Gastrocnemius medialis (tissue), 4 donors: ENCODE measurements at regions of chr3 and their contacts with region 1.

Region 1: DNA sequence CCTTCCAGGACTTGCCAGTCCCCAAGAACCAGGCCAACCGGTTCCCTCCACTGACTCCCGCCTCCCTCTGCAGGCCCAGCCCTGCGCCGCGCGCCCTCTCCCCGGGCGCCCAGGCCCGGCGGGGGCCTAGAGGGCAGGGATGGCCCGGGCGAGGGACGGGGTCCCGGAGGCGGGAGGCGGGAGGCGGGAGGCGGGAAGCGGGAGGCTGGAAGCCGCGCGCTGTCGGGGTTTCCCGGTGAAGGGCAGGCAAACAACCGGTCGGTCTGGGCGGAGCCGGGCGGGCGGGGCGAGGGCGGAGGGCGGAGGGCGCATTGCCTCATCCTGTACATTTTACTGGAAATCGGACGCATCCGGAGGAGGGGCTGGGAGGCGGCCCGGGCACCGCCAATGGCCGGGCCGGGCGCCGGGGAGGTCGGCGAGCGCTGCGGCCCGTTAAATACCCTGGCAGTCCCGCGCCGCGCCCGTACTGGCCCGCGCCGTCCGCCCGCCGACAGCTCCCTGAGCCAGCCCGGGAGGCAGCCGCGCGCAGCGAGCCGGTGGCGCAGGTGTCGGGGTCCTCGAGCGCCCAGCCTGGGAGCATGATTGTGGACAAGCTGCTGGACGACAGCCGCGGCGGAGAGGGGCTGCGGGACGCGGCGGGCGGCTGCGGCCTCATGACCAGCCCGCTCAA is at the start of gene NFKBIZ:
- DNase-seq: peak; percentile 93 to 95
- ATAC-seq: peak; percentile 93 to 94
- H3K4me3 ChIP-seq: peak within 1 kb of the TSS; percentile 73 to 89 (median 85)
- H3K27ac ChIP-seq: peak within 1 kb of the TSS; percentile 83 to 96 (median 94)
- H3K4me1 ChIP-seq: peaks cover 6% of the 10 kb centered on the region in 2 donors
- H3K27me3 ChIP-seq: no peaks in the 10 kb centered on the region
- CTCF ChIP-seq: peak in 1 of 5 experiments; percentile 18
- POLR2A ChIP-seq: peak; percentile 96 to 99
- total RNA-seq, gene NFKBIZ: 9.2 to 25.9 (median 20.6) TPM

Region 2: GRCh38 chr3:101588616-101589015 is 260.6 kb before region 1 on chr3:
- in situ Hi-C with region 1: no loop called
- intact Hi-C with region 1: no loop called
- DNase-seq: no peak
- ATAC-seq: no peak
- H3K4me3 ChIP-seq: no peak overlapping the region
- H3K27ac ChIP-seq: no peak overlapping the region
- H3K4me1 ChIP-seq: no peaks in the 10 kb centered on the region
- H3K27me3 ChIP-seq: no peaks in the 10 kb centered on the region
- CTCF ChIP-seq: no peak
- POLR2A ChIP-seq: no peak

Region 3: GRCh38 chr3:101809178-101810021 is 39.8 kb before region 1 on chr3:
- in situ Hi-C with region 1: no loop called
- intact Hi-C with region 1: loop called (anchors 5 kb)
- DNase-seq: no peak
- ATAC-seq: peak; percentile 40 to 44
- H3K4me3 ChIP-seq: no peak overlapping the region
- H3K27ac ChIP-seq: peak overlapping the region in 1 of 4 donors; percentile 7
- H3K4me1 ChIP-seq: peaks cover 14 to 44% of the 10 kb centered on the region in 2 donors
- H3K27me3 ChIP-seq: no peaks in the 10 kb centered on the region
- CTCF ChIP-seq: peak; percentile 60 to 73 (median 61)
- POLR2A ChIP-seq: no peak

Region 4: GRCh38 chr3:101827211-101828174 is 21.7 kb before region 1 on chr3:
- in situ Hi-C with region 1: no loop called
- intact Hi-C with region 1: loop called (anchors 2 kb)
- DNase-seq: peak; percentile 52
- ATAC-seq: peak; percentile 67 to 69
- H3K4me3 ChIP-seq: peak overlapping the region; percentile 51 to 77 (median 70)
- H3K27ac ChIP-seq: peak overlapping the region; percentile 80 to 85 (median 83)
- H3K4me1 ChIP-seq: peaks cover 28 to 41% of the 10 kb centered on the region in 2 donors
- H3K27me3 ChIP-seq: no peaks in the 10 kb centered on the region
- CTCF ChIP-seq: no peak
- POLR2A ChIP-seq: peak in 1 of 2 donors; percentile 53

Region 5: GRCh38 chr3:102053375-102053989 is 204.3 kb after region 1 on chr3:
- in situ Hi-C with region 1: no loop called
- intact Hi-C with region 1: no loop called
- DNase-seq: no peak
- ATAC-seq: no peak
- H3K4me3 ChIP-seq: no peak overlapping the region
- H3K27ac ChIP-seq: no peak overlapping the region
- H3K4me1 ChIP-seq: no peaks in the 10 kb centered on the region
- H3K27me3 ChIP-seq: no peaks in the 10 kb centered on the region
- CTCF ChIP-seq: no peak
- POLR2A ChIP-seq: no peak

Region 6: DNA sequence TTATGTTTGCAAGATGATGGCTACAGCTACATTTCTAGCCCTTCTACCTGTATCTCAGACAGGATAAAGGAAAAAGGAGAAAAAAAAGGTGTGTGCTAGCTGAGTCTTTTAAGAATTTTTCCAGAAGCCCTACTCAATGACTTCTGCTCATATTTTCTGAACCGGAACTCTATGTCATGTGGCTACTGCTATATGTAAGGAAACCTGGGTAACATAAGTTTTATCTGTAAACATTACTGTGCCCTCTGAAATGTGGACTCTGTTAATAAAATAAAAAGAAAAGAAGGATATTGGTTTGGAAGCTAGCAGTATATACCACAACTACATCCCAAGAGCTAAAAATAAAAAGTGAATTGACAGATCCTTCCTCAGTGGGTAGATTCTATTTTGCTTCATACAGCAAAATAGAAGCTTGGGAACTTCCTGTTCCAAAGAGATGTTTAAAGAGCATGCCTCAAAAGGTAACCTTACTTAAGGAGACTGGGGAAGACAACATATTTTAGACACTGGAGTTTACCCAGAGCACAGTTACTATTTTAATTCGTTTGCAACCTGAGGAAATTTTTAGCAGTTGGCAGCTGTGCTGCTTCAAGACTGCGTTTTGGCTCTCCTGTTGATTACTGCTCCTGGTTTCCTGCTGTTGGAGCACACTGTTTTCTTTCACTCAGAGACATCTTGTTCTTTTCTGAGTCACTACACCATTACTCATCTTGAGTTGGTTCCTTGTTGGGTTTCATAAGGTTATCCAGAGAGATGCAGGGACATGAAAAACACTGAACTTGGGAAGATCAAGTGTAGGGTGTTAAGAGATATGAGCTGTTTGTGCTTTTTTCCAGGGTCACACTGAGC is 280.8 kb after region 1 on chr3:
- in situ Hi-C with region 1: no loop called
- intact Hi-C with region 1: loop called (anchors 2 kb)
- DNase-seq: peak; percentile 62 to 65
- ATAC-seq: peak; percentile 94 to 96
- H3K4me3 ChIP-seq: no peak overlapping the region
- H3K27ac ChIP-seq: peak overlapping the region; percentile 73 to 88 (median 86)
- H3K4me1 ChIP-seq: peaks cover 9 to 13% of the 10 kb centered on the region in 2 donors
- H3K27me3 ChIP-seq: no peaks in the 10 kb centered on the region
- CTCF ChIP-seq: no peak
- POLR2A ChIP-seq: peak in 1 of 2 donors; percentile 43